PC-3 (cell line): ENCODE measurements at regions of chr3 and their contacts with region 1.

Region 1: DNA sequence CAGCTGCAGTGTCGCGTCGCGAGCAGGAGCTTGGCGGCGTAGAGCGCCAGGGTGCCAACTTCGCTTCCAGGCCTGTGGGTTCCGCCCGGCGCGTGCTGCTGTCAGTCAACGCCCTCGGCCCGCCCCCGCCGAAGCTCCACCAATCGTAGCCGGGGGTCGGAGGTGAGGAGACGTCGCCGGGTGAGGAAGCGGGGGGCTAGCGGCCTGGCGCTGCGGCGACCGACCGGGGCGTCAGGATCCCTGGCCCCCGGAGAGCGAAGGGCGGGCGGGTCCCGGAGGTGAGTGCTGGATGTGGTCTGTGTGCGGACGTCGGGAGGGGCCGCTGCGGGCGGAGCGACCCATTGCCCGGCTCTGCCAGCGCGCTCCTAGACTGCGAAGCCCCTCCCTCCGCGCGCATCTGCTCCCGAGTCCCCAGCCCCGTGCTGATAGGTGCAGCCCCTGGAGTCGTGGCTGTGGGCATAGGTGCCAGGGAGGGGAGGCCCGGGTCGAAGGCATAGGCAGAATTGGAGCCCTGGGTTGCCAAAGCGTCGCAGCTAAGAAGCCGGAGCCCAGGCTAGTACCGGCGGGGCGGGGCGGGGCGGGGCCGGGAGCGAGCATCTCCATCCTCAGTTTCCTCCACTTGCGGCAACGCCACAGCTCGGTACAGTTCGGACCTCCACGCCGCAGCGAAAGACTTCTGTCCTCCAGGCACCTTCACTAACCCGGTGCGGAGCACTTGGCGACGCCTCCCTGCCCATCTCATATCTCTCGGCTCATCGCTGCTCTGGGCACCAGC is at the start of gene NXPE3:
- DNase-seq: peak; percentile 85
- ATAC-seq: peak; percentile 91
- H3K4me3 ChIP-seq: peak within 1 kb of the TSS; percentile 81
- H3K27ac ChIP-seq: no peak within 1 kb of the TSS
- H3K4me1 ChIP-seq: peaks cover 23% of the 10 kb centered on the region
- H3K27me3 ChIP-seq: no peaks in the 10 kb centered on the region
- CTCF ChIP-seq: no peak
- total RNA-seq, gene NXPE3: 11.6 and 12.6 TPM in 2 replicates

Region 2: GRCh38 chr3:101744735-101745134 is 34.5 kb before region 1 on chr3:
- CTCF ChIA-PET with region 1: interaction called, 6 read pairs
- POLR2A ChIA-PET with region 1: interaction called, 14 read pairs
- intact Hi-C with region 1: no loop called
- DNase-seq: no peak
- ATAC-seq: peak; percentile 27; the same call in 1 of the 2 replicates
- H3K4me3 ChIP-seq: no peak overlapping the region
- H3K27ac ChIP-seq: no peak overlapping the region
- H3K4me1 ChIP-seq: no peaks in the 10 kb centered on the region
- H3K27me3 ChIP-seq: no peaks in the 10 kb centered on the region
- CTCF ChIP-seq: no peak

Region 3: DNA sequence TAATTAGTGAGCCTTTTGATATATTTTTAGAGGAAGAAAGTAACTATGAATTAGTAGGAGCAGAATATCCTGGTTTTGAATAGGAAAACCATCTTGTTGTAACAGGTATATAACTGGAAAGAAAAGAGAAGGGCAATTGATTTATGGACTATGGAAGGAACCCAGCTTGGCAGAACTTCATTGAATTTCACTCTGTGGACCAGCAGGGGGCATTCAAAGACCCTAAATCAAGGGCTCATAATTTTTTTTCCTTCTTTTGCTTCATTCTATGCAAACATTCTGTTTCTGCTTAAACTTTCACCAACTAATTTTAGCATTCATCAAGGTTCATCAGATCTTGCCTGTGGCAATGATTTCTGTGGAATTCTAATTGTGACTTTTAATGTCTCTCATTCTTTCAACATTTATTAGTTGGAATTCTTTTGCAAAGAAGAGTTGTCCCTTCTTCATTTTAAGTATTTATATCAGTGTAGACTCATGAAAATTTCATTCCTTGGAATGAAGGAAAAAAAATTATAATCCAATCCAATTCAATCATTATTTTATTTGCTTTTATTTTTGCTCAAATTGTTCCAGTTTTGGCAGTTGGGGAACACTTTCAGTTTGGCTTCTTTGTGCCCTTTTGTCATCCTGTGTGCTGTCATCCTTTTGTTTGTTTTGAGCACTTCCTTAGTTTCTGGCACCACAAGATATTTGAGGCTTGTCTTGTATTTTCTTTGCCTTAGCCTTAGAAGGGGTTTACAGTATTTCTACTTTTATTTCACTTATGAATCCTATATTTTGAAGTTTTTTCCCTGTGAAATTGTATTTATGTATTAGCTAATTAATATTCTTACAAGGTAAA is 30.2 kb after region 1 on chr3:
- CTCF ChIA-PET with region 1: no interaction called
- POLR2A ChIA-PET with region 1: no interaction called
- intact Hi-C with region 1: no loop called
- DNase-seq: peak; percentile 74
- ATAC-seq: peak; percentile 78
- H3K4me3 ChIP-seq: no peak overlapping the region
- H3K27ac ChIP-seq: peak overlapping the region; percentile 58
- H3K4me1 ChIP-seq: peaks cover 19% of the 10 kb centered on the region
- H3K27me3 ChIP-seq: no peaks in the 10 kb centered on the region
- CTCF ChIP-seq: peak; percentile 93

Region 4: DNA sequence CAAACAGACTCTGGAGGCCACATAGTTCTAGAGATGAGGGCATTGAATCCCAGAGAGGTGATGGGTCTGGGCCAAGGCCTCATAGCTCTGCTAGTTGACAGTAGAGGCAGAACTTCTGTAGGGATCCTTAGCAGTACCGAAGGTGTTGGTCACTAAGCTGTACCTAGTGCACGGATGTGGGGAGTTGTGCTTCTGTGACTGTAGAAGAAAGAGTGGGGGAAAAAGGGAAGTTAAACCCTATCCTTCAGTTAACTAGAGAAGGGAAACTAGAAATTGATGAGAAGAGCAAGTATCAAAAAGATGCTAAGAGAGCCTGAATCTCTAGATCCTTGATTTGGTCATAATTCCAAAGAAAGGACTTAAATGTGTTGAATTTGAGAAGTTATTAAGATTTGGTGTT is 256.8 kb after region 1 on chr3:
- CTCF ChIA-PET with region 1: no interaction called
- POLR2A ChIA-PET with region 1: no interaction called
- intact Hi-C with region 1: no loop called
- DNase-seq: no peak
- ATAC-seq: no peak
- H3K4me3 ChIP-seq: no peak overlapping the region
- H3K27ac ChIP-seq: peak overlapping the region; percentile 60
- H3K4me1 ChIP-seq: peaks cover 15% of the 10 kb centered on the region
- H3K27me3 ChIP-seq: no peaks in the 10 kb centered on the region
- CTCF ChIP-seq: no peak

Region 5: GRCh38 chr3:102339671-102340070 is 560.4 kb after region 1 on chr3:
- CTCF ChIA-PET with region 1: no interaction called
- POLR2A ChIA-PET with region 1: no interaction called
- intact Hi-C with region 1: no loop called
- DNase-seq: no peak
- ATAC-seq: no peak
- H3K4me3 ChIP-seq: no peak overlapping the region
- H3K27ac ChIP-seq: no peak overlapping the region
- H3K4me1 ChIP-seq: peaks cover 10% of the 10 kb centered on the region
- H3K27me3 ChIP-seq: no peaks in the 10 kb centered on the region
- CTCF ChIP-seq: no peak